ENCODE measurements at regions of chr11 and their contacts with region 1.

Region 1: DNA sequence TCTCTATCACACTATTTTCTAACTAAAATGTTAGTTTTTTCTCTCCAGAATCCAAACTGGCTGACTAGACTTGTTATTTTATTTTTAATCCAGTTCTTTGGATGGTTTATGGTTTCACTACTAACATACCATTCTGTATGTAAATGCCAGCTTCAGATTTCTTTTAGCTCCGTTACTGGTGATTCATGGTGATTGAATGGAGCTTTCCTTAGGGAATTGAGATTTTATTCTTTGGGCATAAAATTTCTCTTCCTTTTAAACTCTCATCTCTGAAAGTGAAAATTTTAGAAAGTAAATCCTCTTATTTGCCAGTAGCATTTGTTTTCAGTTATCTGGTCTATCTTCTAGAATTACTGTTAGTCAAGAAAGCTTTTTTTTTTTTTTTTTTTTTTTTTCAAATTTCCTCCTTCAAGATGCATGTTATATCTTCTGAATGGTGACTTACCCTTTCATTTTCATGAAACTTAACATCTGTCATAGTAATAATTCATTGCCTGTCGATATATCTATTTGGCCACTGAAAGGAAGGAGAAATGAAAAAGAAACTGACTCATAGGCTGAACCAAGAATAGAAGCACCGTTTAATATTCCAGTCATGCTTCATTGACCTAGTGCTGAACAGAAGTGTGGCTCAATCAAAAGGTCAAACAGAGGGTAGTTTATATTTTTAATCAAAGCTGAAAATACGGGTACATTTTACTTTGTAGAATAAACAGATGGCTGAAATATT is 6.4 kb downstream of the ENDOD1 start:
- DNase-seq: no peak
- ATAC-seq: peak; percentile 89
- H3K4me3 Mint-ChIP-seq: peak overlapping the region; percentile 59
- H3K27ac Mint-ChIP-seq: peak overlapping the region; percentile 78
- H3K4me1 Mint-ChIP-seq: peaks cover 94% of the 10 kb centered on the region
- H3K27me3 Mint-ChIP-seq: no peaks in the 10 kb centered on the region
- CTCF ChIP-seq: no peak

Region 2: DNA sequence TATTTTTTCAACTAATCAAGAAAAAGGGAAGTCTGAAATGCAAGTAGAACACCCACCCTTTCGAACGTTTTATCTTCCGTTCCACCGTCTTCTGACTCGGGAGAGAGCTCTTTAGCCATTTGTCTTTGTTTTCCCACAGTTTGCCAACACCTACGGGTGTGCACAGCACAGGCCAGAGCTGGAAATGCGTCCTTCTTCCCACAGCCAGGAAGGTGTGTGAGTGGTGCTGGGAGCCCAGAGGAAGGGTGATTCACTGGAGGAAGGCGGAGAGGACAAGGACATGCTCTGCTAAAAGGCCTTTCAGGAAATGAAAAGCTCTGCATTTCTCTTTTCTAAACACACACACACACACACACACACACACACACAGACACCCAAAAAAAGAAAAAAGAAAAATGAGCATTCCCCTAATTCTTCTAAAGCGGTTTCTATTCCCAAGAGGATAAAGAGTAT is 12.2 kb after region 1 on chr11:
- CTCF ChIA-PET with region 1: interaction called, 5 read pairs
- POLR2A ChIA-PET with region 1: interaction called, 41 read pairs
- intact Hi-C with region 1: loop called (anchors 1 kb)
- DNase-seq: no peak
- ATAC-seq: peak; percentile 45
- H3K4me3 Mint-ChIP-seq: peak overlapping the region; percentile 79
- H3K27ac Mint-ChIP-seq: peak overlapping the region; percentile 93
- H3K4me1 Mint-ChIP-seq: peaks cover 58% of the 10 kb centered on the region
- H3K27me3 Mint-ChIP-seq: no peaks in the 10 kb centered on the region
- CTCF ChIP-seq: no peak

Region 3: DNA sequence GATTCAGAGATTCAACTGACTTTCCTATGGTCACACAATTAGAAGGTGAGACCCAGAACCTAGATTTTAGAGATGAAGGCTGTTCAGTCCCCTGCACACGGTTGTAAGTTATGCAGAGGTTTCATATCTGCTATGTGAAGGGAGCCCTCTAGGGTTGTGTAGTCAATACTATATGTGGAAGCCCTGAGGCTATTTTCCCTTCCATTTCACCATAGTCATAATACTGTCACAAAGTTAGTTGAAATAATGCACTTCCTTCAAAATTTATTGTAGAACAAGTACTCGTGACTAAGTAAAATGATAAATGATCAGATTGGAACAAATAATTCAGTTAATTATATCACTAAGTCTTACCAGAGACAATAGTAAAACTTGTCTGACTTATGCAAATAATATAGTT is 42.4 kb after region 1 on chr11:
- CTCF ChIA-PET with region 1: interaction called, 7 read pairs
- POLR2A ChIA-PET with region 1: interaction called, 5 read pairs
- intact Hi-C with region 1: loop called (anchors 1 kb)
- DNase-seq: no peak
- ATAC-seq: peak; percentile 84
- H3K4me3 Mint-ChIP-seq: no peak overlapping the region
- H3K27ac Mint-ChIP-seq: no peak overlapping the region
- H3K4me1 Mint-ChIP-seq: peaks cover 10% of the 10 kb centered on the region
- H3K27me3 Mint-ChIP-seq: no peaks in the 10 kb centered on the region
- CTCF ChIP-seq: no peak

Region 4: GRCh38 chr11:95254131-95254704 is 158.2 kb after region 1 on chr11:
- CTCF ChIA-PET with region 1: no interaction called
- POLR2A ChIA-PET with region 1: no interaction called
- intact Hi-C with region 1: no loop called
- DNase-seq: peak; percentile 54
- ATAC-seq: peak; percentile 94
- H3K4me3 Mint-ChIP-seq: peak overlapping the region; percentile 75
- H3K27ac Mint-ChIP-seq: peak overlapping the region; percentile 91
- H3K4me1 Mint-ChIP-seq: peaks cover 81% of the 10 kb centered on the region
- H3K27me3 Mint-ChIP-seq: no peaks in the 10 kb centered on the region
- CTCF ChIP-seq: no peak